Naive thymus-derived CD4-positive, alpha-beta T cell (primary cell): ENCODE measurements at regions of chr11 and their contacts with region 1.

Region 1: GRCh38 chr11:85854557-85855340 is 434 bp upstream of the CCDC83 start:
- DNase-seq: peak; percentile 81 to 97 (median 90)
- ATAC-seq: peak; percentile 99
- H3K4me3 ChIP-seq: peak overlapping the region; percentile 71
- H3K4me3 Mint-ChIP-seq: peak overlapping the region; percentile 79 to 95 (median 94)
- H3K27ac ChIP-seq: peak overlapping the region; percentile 84
- H3K27ac Mint-ChIP-seq: peak overlapping the region; percentile 85 to 98 (median 95)
- H3K4me1 ChIP-seq: peaks cover 6 to 9% of the 10 kb centered on the region in 2 donors
- H3K4me1 Mint-ChIP-seq: peaks cover 0 to 15% (median 13%) of the 10 kb centered on the region in 7 donors
- H3K27me3 ChIP-seq: no peaks in the 10 kb centered on the region
- H3K27me3 Mint-ChIP-seq: peaks cover 0 to 7% (median 0%) of the 10 kb centered on the region in 5 donors

Region 2: GRCh38 chr11:85627998-85628770 is 226.6 kb before region 1 on chr11 and contains the start of gene TMEM126B:
- CTCF ChIA-PET with region 1: no interaction called
- POLR2A ChIA-PET with region 1: no interaction called
- intact Hi-C with region 1: loop called (anchors 1 kb)
- DNase-seq: peak; percentile 85 to 95 (median 94)
- ATAC-seq: peak; percentile 99
- H3K4me3 ChIP-seq: peak within 1 kb of the TSS; percentile 98
- H3K4me3 Mint-ChIP-seq: peak within 1 kb of the TSS; percentile 84 to 98 (median 94)
- H3K27ac ChIP-seq: peak within 1 kb of the TSS; percentile 85
- H3K27ac Mint-ChIP-seq: peak within 1 kb of the TSS; percentile 89 to 97 (median 94)
- H3K4me1 ChIP-seq: peaks cover 13 to 22% of the 10 kb centered on the region in 2 donors
- H3K4me1 Mint-ChIP-seq: peaks cover 17 to 67% (median 48%) of the 10 kb centered on the region in 7 donors
- H3K27me3 ChIP-seq: no peaks in the 10 kb centered on the region
- H3K27me3 Mint-ChIP-seq: peaks cover 0 to 9% (median 0%) of the 10 kb centered on the region in 5 donors
- total RNA-seq, gene TMEM126B: 22.1 to 50.4 (median 36.4) TPM

Region 3: DNA sequence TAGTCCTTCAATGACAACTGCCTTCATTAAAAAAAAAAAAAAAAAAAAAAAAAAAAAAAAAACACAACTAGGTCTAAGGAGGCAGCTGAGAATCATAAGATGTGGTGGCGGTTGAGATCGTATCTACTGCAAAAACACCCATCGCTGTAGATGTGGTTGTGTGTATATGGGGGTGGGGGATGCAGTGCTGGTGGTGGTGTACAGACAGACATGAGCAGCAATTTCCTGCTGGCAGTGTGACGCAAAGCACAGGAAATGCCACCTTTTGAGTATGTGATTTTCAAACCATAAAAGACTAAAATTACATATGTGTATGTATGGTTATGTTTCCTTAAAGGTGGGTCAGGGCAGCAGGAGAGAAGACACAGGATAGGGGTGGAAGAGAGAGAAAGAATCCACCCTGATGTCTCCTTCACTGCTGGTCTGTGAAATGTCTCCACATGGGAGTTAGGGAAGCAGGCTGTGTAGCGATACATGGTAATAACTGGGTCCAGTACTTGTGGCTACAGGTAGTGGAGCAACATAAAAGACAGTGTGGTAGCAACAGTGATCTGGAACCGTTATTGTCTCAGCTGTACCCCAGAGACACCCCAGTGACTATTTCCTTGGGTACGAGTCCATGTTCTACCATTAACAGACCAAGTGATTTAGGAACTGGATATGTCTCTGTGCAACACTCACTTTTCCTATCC is 101.7 kb before region 1 on chr11:
- CTCF ChIA-PET with region 1: no interaction called
- POLR2A ChIA-PET with region 1: no interaction called
- intact Hi-C with region 1: loop called (anchors 1 kb)
- DNase-seq: peak; percentile 44 to 99 (median 99)
- ATAC-seq: peak; percentile 95
- H3K4me3 ChIP-seq: peak overlapping the region; percentile 54
- H3K4me3 Mint-ChIP-seq: peak overlapping the region; percentile 75 to 91 (median 84)
- H3K27ac ChIP-seq: peak overlapping the region; percentile 70
- H3K27ac Mint-ChIP-seq: peak overlapping the region; percentile 90 to 99 (median 98)
- H3K4me1 ChIP-seq: peaks cover 80 to 82% of the 10 kb centered on the region in 2 donors
- H3K4me1 Mint-ChIP-seq: peaks cover 64 to 100% (median 98%) of the 10 kb centered on the region in 7 donors
- H3K27me3 ChIP-seq: no peaks in the 10 kb centered on the region
- H3K27me3 Mint-ChIP-seq: no peaks in the 10 kb centered on the region

Region 4: GRCh38 chr11:85844426-85845129 is 10.2 kb before region 1 on chr11:
- CTCF ChIA-PET with region 1: no interaction called
- POLR2A ChIA-PET with region 1: no interaction called
- intact Hi-C with region 1: no loop called
- DNase-seq: no peak
- ATAC-seq: no peak
- H3K4me3 ChIP-seq: no peak overlapping the region
- H3K4me3 Mint-ChIP-seq: no peak overlapping the region
- H3K27ac ChIP-seq: no peak overlapping the region
- H3K27ac Mint-ChIP-seq: peak overlapping the region in 1 of 9 donors; percentile 7
- H3K4me1 ChIP-seq: no peaks in the 10 kb centered on the region
- H3K4me1 Mint-ChIP-seq: peaks cover 0 to 16% (median 0%) of the 10 kb centered on the region in 7 donors
- H3K27me3 ChIP-seq: no peaks in the 10 kb centered on the region
- H3K27me3 Mint-ChIP-seq: peaks cover 0 to 3% (median 0%) of the 10 kb centered on the region in 5 donors

Region 5: DNA sequence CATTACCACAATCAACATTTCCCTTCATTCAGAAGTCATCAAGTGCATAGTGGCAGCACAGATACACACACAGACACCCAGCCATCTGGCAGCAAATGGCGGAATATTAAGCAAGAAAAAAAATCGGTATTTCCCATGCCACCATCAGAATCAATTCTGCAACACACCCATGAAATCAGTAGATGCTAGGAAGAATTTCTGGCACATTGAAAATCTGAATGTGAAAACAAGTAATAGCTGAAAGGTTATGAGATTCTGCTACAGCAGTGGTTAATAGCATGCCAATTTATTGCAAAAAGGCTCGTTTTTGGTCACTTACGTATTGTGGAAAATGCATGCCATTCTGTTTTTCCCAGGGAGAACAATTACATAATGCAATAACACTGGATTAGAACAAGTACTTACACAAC is 123.0 kb after region 1 on chr11:
- CTCF ChIA-PET with region 1: no interaction called
- POLR2A ChIA-PET with region 1: no interaction called
- intact Hi-C with region 1: loop called in 1 of 2 experiments (anchors 5 kb)
- DNase-seq: no peak
- ATAC-seq: no peak
- H3K4me3 ChIP-seq: no peak overlapping the region
- H3K4me3 Mint-ChIP-seq: no peak overlapping the region
- H3K27ac ChIP-seq: no peak overlapping the region
- H3K27ac Mint-ChIP-seq: peak overlapping the region in 1 of 9 donors; percentile 10
- H3K4me1 ChIP-seq: no peaks in the 10 kb centered on the region
- H3K4me1 Mint-ChIP-seq: peaks cover 0 to 13% (median 5%) of the 10 kb centered on the region in 7 donors
- H3K27me3 ChIP-seq: no peaks in the 10 kb centered on the region
- H3K27me3 Mint-ChIP-seq: no peaks in the 10 kb centered on the region

Region 6: GRCh38 chr11:86218125-86219084 is 363.7 kb after region 1 on chr11:
- CTCF ChIA-PET with region 1: interaction called, 3 read pairs
- POLR2A ChIA-PET with region 1: no interaction called
- intact Hi-C with region 1: loop called (anchors 1 kb)
- DNase-seq: peak in 8 of 9 donors; percentile 17 to 54 (median 42)
- ATAC-seq: peak; percentile 92
- H3K4me3 ChIP-seq: peak overlapping the region; percentile 32
- H3K4me3 Mint-ChIP-seq: peak overlapping the region; percentile 32 to 79 (median 67)
- H3K27ac ChIP-seq: no peak overlapping the region
- H3K27ac Mint-ChIP-seq: peak overlapping the region in 2 of 9 donors; percentile 44 to 45
- H3K4me1 ChIP-seq: no peaks in the 10 kb centered on the region
- H3K4me1 Mint-ChIP-seq: peaks cover 4 to 42% (median 12%) of the 10 kb centered on the region in 7 donors
- H3K27me3 ChIP-seq: no peaks in the 10 kb centered on the region
- H3K27me3 Mint-ChIP-seq: peaks cover 0 to 12% (median 5%) of the 10 kb centered on the region in 5 donors

Region 7: DNA sequence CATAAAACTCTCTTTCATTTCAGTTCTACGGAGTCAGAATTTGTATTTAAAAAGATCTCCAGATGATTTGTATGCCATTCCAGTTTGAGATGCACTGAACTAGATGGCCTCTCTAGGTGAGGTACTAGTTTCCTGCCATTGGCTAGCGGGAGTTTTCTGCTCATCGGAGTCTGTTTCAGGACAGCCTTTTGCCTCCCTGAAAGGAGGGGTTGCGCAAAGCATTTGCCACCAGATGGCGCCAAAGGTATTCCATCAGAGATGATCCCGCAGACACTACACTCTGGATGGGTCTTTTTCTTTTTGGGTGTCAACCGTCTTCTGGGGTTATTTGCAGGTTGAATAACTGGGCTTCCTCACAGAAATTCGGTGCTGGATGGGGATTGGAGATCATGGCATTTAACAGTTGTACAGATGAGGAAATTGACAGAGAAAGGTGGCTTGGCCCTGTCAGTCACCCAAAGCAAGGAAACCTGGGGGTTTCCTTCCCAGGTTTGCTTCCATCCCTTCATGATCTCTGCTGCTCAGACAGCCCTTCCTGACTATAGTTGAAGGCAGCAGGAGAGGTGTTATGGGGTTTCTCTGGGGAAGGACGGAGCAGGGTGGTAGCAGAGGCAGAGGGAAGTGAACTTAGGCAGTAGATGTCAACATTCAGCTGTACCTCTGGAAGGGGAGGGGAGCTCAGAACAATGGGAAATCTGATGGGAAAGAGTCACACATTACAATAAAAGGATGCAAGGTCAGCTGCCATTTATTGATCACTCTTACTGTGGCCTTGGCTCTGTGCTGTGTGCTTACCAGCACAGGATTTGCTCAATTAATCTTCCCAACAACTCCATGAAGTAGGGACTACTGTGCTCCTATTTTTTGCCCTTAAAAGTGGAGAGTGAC is 601.5 kb after region 1 on chr11:
- CTCF ChIA-PET with region 1: no interaction called
- POLR2A ChIA-PET with region 1: no interaction called
- intact Hi-C with region 1: loop called (anchors 1 kb)
- DNase-seq: peak; percentile 12 to 76 (median 44)
- ATAC-seq: peak; percentile 74
- H3K4me3 ChIP-seq: no peak overlapping the region
- H3K4me3 Mint-ChIP-seq: no peak overlapping the region
- H3K27ac ChIP-seq: no peak overlapping the region
- H3K27ac Mint-ChIP-seq: no peak overlapping the region
- H3K4me1 ChIP-seq: no peaks in the 10 kb centered on the region
- H3K4me1 Mint-ChIP-seq: peaks cover 0 to 31% (median 4%) of the 10 kb centered on the region in 7 donors
- H3K27me3 ChIP-seq: no peaks in the 10 kb centered on the region
- H3K27me3 Mint-ChIP-seq: no peaks in the 10 kb centered on the region

Region 8: GRCh38 chr11:87675993-87676392 is 1821.2 kb after region 1 on chr11:
- CTCF ChIA-PET with region 1: no interaction called
- POLR2A ChIA-PET with region 1: no interaction called
- intact Hi-C with region 1: no loop called
- DNase-seq: no peak
- ATAC-seq: no peak
- H3K4me3 ChIP-seq: no peak overlapping the region
- H3K4me3 Mint-ChIP-seq: no peak overlapping the region
- H3K27ac ChIP-seq: no peak overlapping the region
- H3K27ac Mint-ChIP-seq: no peak overlapping the region
- H3K4me1 ChIP-seq: no peaks in the 10 kb centered on the region
- H3K4me1 Mint-ChIP-seq: no peaks in the 10 kb centered on the region
- H3K27me3 ChIP-seq: no peaks in the 10 kb centered on the region
- H3K27me3 Mint-ChIP-seq: no peaks in the 10 kb centered on the region